ENCODE measurements at regions of chr5 and their contacts with region 1.

Region 1: DNA sequence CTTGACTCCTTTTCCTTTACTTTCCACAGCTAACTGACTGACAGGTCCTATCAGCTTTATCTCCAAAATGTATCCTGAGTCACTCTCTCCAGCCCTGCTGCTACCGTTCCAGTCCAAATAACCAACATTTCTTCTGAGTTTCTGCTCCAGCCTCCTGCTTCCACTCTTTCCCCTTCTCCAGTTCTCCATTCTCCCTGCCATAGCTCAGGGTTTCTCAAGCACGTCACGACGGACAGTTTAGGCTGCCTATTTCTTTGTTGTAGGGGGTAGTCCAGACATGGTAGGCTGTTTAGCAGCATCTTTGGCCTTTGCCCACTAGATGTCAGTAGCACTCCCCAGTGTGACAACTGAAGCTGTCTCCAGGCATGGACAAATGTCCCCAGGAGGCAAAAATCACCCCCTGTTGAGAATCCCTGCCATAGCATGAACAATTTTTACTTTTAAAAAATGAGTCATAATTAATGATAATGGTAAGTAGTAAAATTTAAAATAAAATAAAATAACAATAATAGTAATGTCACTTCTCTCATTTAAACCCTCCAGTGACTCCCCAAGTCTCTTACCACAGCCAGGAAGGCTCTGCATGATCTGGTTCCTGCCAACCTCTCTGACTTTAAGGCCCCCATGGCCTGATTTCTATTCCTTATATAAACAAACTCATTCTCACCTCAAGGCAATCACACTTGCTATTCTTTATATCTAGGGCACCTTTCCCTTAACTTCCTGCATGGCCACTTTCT is 105.4 kb upstream of the FER start:
- DNase-seq: peak in 8 of 10 donors; percentile 41 to 77 (median 58)
- H3K4me3 ChIP-seq: peak overlapping the region in 16 of 59 donors; percentile 1 to 42 (median 26)
- H3K27ac ChIP-seq: no peak overlapping the region
- H3K27me3 ChIP-seq: no peaks in the 10 kb centered on the region
- CTCF ChIP-seq: peak; percentile 36 to 86 (median 78)

Region 2: GRCh38 chr5:109141222-109142200 is 499.2 kb after region 1 on chr5:
- intact Hi-C with region 1: no loop called
- DNase-seq: no peak
- H3K4me3 ChIP-seq: no peak overlapping the region
- H3K27ac ChIP-seq: no peak overlapping the region
- H3K27me3 ChIP-seq: no peaks in the 10 kb centered on the region
- CTCF ChIP-seq: no peak

Region 3: GRCh38 chr5:110625376-110625999 is 1983.2 kb after region 1 on chr5:
- intact Hi-C with region 1: loop called in 1 of 2 experiments (anchors 10 kb)
- DNase-seq: no peak
- H3K4me3 ChIP-seq: peak overlapping the region in 54 of 59 donors; percentile 1 to 57 (median 41)
- H3K27ac ChIP-seq: peak overlapping the region in 3 of 59 donors; percentile 5 to 36 (median 31)
- H3K27me3 ChIP-seq: no peaks in the 10 kb centered on the region
- CTCF ChIP-seq: peak; percentile 49 to 92 (median 68)